Gastrocnemius medialis (tissue), 4 donors: ENCODE measurements at regions of chr12 and their contacts with region 1.

Region 1: DNA sequence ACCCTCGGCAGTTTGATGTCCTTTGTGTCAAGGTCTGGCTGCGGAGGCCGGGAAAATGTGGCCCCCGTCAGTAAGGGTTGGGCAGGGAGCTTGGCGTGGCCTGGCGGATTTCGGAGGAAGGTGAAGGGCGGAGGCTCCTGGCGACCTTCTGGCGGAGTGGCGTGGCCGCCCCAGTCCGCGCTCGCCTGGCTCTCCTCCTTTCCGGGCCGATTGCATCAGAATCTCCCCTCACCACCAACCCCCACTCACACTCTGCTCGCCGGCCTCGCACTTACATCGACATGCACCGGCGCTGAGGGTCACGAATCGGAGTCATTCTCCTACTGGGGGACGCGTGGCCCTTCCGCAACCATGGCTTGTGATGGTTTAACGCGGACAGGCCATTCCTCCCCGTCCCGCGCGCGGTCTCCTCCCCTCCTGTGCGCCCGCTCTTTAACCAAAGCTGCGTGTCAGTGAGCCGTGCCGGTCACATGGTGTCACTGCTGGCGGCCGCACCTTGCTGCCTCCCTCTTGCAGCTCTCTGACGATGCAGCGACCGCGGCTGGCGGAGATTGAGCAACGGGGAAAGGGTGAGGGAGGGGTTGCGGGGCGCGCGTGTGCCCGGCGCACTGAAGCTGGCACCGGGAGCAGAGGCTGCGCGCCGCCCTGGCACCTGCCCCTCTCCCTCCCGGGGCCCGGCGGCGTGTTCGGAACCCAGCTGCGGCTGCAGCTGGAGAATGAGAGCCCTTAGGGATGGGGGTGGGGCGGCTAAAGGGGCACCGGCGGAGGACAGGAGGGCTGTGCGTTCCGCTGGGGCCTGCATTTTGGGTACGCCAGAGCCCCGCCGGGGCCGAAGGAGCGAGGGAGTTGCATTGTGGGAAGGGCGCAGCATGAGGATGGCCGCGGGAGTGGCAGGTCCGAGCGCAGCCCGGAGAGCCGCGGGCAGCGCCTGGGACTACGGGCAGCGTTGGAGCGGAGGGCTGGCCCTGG is at the start of gene SLC38A1:
- DNase-seq: peak; percentile 92 to 94
- ATAC-seq: peak; percentile 74
- H3K4me3 ChIP-seq: peak within 1 kb of the TSS; percentile 62 to 78 (median 70)
- H3K27ac ChIP-seq: peak within 1 kb of the TSS; percentile 91 to 98 (median 93)
- H3K4me1 ChIP-seq: peaks cover 7 to 18% of the 10 kb centered on the region in 2 donors
- H3K27me3 ChIP-seq: no peaks in the 10 kb centered on the region
- CTCF ChIP-seq: peak in 1 of 5 experiments; percentile 10
- POLR2A ChIP-seq: peak; percentile 84 to 96
- total RNA-seq, gene SLC38A1: 237 to 472 (median 339) TPM

Region 2: GRCh38 chr12:45728630-45729232 is 540.1 kb before region 1 on chr12:
- in situ Hi-C with region 1: no loop called
- intact Hi-C with region 1: loop called (anchors 5 kb)
- DNase-seq: peak; percentile 88 to 94
- ATAC-seq: peak; percentile 55 to 58
- H3K4me3 ChIP-seq: peak overlapping the region; percentile 81 to 91 (median 84)
- H3K27ac ChIP-seq: peak overlapping the region; percentile 98 to 100 (median 98)
- H3K4me1 ChIP-seq: peaks cover 46 to 47% of the 10 kb centered on the region in 2 donors
- H3K27me3 ChIP-seq: no peaks in the 10 kb centered on the region
- CTCF ChIP-seq: peak; percentile 91 to 99 (median 98)
- POLR2A ChIP-seq: peak; percentile 81 to 89

Region 3: DNA sequence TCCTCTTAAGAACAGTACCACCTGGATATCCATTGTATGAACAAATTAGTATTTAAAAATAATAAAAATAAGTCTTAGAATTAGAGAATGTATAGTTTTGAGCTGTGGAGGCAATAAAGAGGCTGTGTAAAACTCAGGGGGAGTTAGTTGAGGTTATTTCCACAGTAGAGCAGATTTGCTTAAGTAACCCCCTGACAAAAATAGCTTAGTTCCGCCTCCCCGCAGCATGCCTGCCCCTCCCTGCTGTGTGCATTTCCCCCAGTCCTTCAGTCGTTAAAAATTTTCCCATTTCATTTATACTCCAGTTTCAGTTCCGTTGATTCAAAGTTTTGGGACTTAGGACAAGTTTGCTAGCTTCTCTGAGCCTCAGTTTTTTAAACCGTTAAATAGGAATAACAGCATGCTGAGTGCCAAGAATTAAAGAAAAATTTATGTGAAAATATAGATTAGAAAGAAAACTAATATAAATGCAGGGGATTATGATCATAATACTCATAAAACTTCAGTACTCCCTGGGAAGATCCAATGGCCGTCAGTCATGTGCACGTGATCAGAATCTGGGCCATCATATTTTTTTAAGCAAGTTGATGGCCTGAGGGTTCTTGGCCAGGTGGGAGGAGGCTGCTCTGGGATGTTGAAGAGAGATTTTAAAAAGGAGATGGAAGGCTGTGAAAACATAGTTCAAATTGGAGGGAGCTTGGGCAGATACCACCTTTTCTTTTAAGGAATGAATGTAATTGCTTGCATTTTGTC is 118.2 kb after region 1 on chr12:
- in situ Hi-C with region 1: no loop called
- intact Hi-C with region 1: no loop called
- DNase-seq: peak in 1 of 2 donors; percentile 62
- ATAC-seq: peak in 1 of 2 donors; percentile 19
- H3K4me3 ChIP-seq: peak overlapping the region; percentile 29 to 45 (median 36)
- H3K27ac ChIP-seq: peak overlapping the region; percentile 92 to 98 (median 96)
- H3K4me1 ChIP-seq: peaks cover 44 to 73% of the 10 kb centered on the region in 2 donors
- H3K27me3 ChIP-seq: no peaks in the 10 kb centered on the region
- CTCF ChIP-seq: no peak
- POLR2A ChIP-seq: peak in 1 of 2 donors; percentile 11

Region 4: GRCh38 chr12:46468159-46468558 is 199.3 kb after region 1 on chr12:
- in situ Hi-C with region 1: no loop called
- intact Hi-C with region 1: loop called (anchors 5 kb)
- DNase-seq: peak; percentile 57 to 84
- ATAC-seq: peak; percentile 90 to 97
- H3K4me3 ChIP-seq: no peak overlapping the region
- H3K27ac ChIP-seq: peak overlapping the region; percentile 75 to 83 (median 81)
- H3K4me1 ChIP-seq: peaks cover 54 to 56% of the 10 kb centered on the region in 2 donors
- H3K27me3 ChIP-seq: no peaks in the 10 kb centered on the region
- CTCF ChIP-seq: peak in 2 of 5 experiments; percentile 6 to 18
- POLR2A ChIP-seq: peak in 1 of 2 donors; percentile 46

Region 5: DNA sequence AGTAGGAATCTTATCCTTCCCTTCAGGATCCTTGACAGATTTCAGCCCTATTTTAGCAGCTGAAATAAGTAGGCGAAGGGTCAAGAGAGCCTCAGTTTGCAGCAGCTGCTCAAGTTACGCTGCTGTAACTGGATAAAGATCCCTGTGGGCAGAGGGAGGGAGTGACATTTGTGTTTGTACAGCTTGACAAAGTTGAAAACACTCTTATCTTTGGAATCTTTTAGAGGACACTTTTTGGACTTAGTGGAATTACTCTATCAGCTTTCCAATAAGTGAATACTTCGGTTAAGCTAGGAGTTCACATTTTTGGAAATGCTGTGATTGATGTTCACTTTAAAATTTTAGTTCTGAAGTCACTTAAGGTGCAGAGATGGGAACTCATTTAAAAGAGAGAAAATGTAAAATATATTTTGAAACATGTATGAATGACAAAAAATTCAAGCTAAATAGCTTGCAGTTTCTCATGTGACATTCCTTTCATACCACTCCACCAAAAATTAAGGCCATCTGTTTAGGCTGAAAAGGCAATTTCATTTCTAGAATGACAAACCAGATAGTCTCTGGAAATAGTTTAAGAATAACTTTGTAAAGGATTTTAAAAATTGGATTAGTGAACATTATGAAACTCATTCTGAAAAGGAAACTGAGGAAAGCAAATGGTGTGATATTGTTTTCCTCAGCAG is 501.8 kb after region 1 on chr12:
- in situ Hi-C with region 1: no loop called
- intact Hi-C with region 1: loop called (anchors 2 kb)
- DNase-seq: peak; percentile 63 to 64
- ATAC-seq: peak; percentile 75 to 79
- H3K4me3 ChIP-seq: peak overlapping the region in 3 of 4 donors; percentile 0 to 21 (median 10)
- H3K27ac ChIP-seq: peak overlapping the region; percentile 85 to 90 (median 88)
- H3K4me1 ChIP-seq: peaks cover 50 to 67% of the 10 kb centered on the region in 2 donors
- H3K27me3 ChIP-seq: no peaks in the 10 kb centered on the region
- CTCF ChIP-seq: peak in 1 of 5 experiments; percentile 8
- POLR2A ChIP-seq: peak in 1 of 2 donors; percentile 56

Region 6: GRCh38 chr12:47377414-47378221 is 1108.7 kb after region 1 on chr12:
- in situ Hi-C with region 1: no loop called
- intact Hi-C with region 1: loop called (anchors 2 kb)
- DNase-seq: peak; percentile 18 to 98
- ATAC-seq: peak; percentile 62 to 100
- H3K4me3 ChIP-seq: no peak overlapping the region
- H3K27ac ChIP-seq: peak overlapping the region in 3 of 4 donors; percentile 72 to 82 (median 82)
- H3K4me1 ChIP-seq: peaks cover 0 to 12% of the 10 kb centered on the region in 2 donors
- H3K27me3 ChIP-seq: no peaks in the 10 kb centered on the region
- CTCF ChIP-seq: no peak
- POLR2A ChIP-seq: no peak

Region 7: GRCh38 chr12:48157018-48157888 is 1888.4 kb after region 1 on chr12 and contains the start of gene ASB8:
- in situ Hi-C with region 1: no loop called
- intact Hi-C with region 1: loop called (anchors 10 kb)
- DNase-seq: peak; percentile 98 to 100
- ATAC-seq: peak; percentile 78 to 82
- H3K4me3 ChIP-seq: peak within 1 kb of the TSS; percentile 63 to 82 (median 74)
- H3K27ac ChIP-seq: peak within 1 kb of the TSS; percentile 84 to 98 (median 93)
- H3K4me1 ChIP-seq: peaks cover 54 to 73% of the 10 kb centered on the region in 2 donors
- H3K27me3 ChIP-seq: no peaks in the 10 kb centered on the region
- CTCF ChIP-seq: peak; percentile 43 to 60 (median 54)
- POLR2A ChIP-seq: peak; percentile 66 to 82
- total RNA-seq, gene ASB8: 134 to 359 (median 210) TPM